ENCODE measurements at regions of chr5 and their contacts with region 1.

Region 1: DNA sequence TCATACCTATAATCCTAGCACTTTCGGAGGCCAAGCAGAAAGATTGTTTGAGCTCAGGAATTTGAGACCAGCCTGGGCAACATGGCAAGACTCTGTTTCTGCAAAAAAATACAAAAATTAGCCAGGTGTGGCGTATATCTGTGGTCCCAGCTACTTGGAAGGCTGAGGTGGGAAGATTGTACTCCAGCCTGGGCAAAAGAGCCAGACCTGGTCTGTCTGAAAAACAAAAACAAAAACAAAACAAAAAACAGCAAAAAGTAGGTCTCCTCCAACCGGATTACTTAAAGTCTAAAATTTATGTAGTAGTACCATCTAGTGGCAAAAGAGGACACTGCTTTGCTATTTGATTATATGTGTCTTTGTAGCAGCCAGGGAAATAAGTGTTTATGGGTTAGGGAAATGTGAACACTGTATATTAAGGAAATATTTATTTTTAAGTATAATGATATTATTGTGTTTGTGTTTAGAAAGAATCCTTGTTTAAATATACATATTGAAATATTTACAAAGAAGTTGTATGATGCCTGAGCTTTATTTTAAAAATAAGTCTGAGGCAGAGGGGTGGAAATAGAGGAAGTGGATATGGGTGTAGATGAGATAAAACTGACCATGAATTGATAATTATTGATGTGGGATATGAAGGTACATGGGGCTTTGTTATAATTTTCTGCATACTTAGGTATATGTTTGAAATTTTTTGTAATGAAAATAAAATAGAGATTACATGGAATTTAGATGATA is 20.0 kb downstream of the APC start:
- DNase-seq: peak; percentile 31
- ATAC-seq: peak; percentile 96
- H3K4me3 ChIP-seq: no peak overlapping the region
- H3K27ac ChIP-seq: no peak overlapping the region
- H3K4me1 ChIP-seq: no peaks in the 10 kb centered on the region
- H3K27me3 ChIP-seq: no peaks in the 10 kb centered on the region
- CTCF ChIP-seq: peak; percentile 58 to 77 (median 75); a peak in 5 of 6 replicates
- EP300 ChIP-seq: no peak
- POLR2A ChIP-seq: no peak
- RAD21 ChIP-seq: peak; percentile 86

Region 2: GRCh38 chr5:112492291-112492690 is 265.3 kb before region 1 on chr5:
- CTCF ChIA-PET with region 1: interaction called, 15 read pairs
- POLR2A ChIA-PET with region 1: no interaction called
- RAD21 ChIA-PET with region 1: interaction called, 6 read pairs
- SMC1A ChIA-PET with region 1: interaction called, 3 read pairs
- in situ Hi-C with region 1: no loop called
- intact Hi-C with region 1: no loop called
- DNase-seq: peak; percentile 12
- ATAC-seq: peak; percentile 100
- H3K4me3 ChIP-seq: no peak overlapping the region
- H3K27ac ChIP-seq: no peak overlapping the region
- H3K4me1 ChIP-seq: no peaks in the 10 kb centered on the region
- H3K27me3 ChIP-seq: no peaks in the 10 kb centered on the region; a peak in 1 of 4 replicates
- CTCF ChIP-seq: peak; percentile 79 to 86 (median 85)
- EP300 ChIP-seq: no peak
- POLR2A ChIP-seq: no peak
- RAD21 ChIP-seq: peak; percentile 69

Region 3: GRCh38 chr5:112551419-112552032 is 206.1 kb before region 1 on chr5:
- CTCF ChIA-PET with region 1: interaction called, 216 read pairs
- POLR2A ChIA-PET with region 1: interaction called, 3 read pairs
- RAD21 ChIA-PET with region 1: interaction called, 39 read pairs
- SMC1A ChIA-PET with region 1: interaction called, 147 read pairs
- in situ Hi-C with region 1: loop called (anchors 5 kb)
- intact Hi-C with region 1: loop called (anchors 1 kb)
- DNase-seq: no peak
- ATAC-seq: peak; percentile 83
- H3K4me3 ChIP-seq: no peak overlapping the region
- H3K27ac ChIP-seq: no peak overlapping the region
- H3K4me1 ChIP-seq: no peaks in the 10 kb centered on the region
- H3K27me3 ChIP-seq: no peaks in the 10 kb centered on the region; a peak in 1 of 4 replicates
- CTCF ChIP-seq: peak; percentile 57 to 79 (median 66)
- EP300 ChIP-seq: no peak
- POLR2A ChIP-seq: no peak
- RAD21 ChIP-seq: peak; percentile 85

Region 4: DNA sequence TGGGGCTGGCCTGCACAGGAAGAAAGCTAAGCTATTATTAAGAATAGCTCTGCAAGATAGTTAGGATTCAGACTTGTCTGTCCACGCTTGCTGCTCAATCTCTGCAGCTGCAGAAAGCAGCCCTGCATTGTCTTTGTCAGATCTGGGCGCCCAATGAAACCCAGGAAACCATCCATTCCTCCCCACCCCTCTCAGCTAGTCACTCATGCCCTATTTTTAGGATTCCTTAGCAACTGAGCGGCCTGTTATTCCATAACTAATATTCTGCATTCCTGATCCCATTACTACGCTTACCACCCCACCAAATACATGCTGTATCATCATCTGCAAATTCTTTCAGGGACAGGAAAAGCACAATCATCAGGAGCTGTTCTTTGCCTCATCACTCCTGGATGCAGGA is 72.9 kb before region 1 on chr5:
- CTCF ChIA-PET with region 1: interaction called, 125 read pairs
- POLR2A ChIA-PET with region 1: interaction called, 3 read pairs
- RAD21 ChIA-PET with region 1: interaction called, 57 read pairs
- SMC1A ChIA-PET with region 1: interaction called, 43 read pairs
- in situ Hi-C with region 1: no loop called
- intact Hi-C with region 1: no loop called
- DNase-seq: no peak
- ATAC-seq: no peak; the same call in 2 of the 3 replicates
- H3K4me3 ChIP-seq: no peak overlapping the region
- H3K27ac ChIP-seq: no peak overlapping the region
- H3K4me1 ChIP-seq: peaks cover 10% of the 10 kb centered on the region
- H3K27me3 ChIP-seq: peaks cover 0 to 2% of the 10 kb centered on the region in 2 experiments; a peak in 1 of 4 replicates
- CTCF ChIP-seq: no peak
- EP300 ChIP-seq: no peak
- POLR2A ChIP-seq: no peak
- RAD21 ChIP-seq: no peak

Region 5: GRCh38 chr5:112707187-112708102 is 50.2 kb before region 1 on chr5:
- CTCF ChIA-PET with region 1: interaction called, 32 read pairs
- POLR2A ChIA-PET with region 1: no interaction called
- RAD21 ChIA-PET with region 1: interaction called, 6 read pairs
- SMC1A ChIA-PET with region 1: interaction called, 20 read pairs
- in situ Hi-C with region 1: no loop called
- intact Hi-C with region 1: loop called (anchors 5 kb)
- DNase-seq: peak; percentile 97
- ATAC-seq: peak; percentile 92
- H3K4me3 ChIP-seq: peak overlapping the region; percentile 85
- H3K27ac ChIP-seq: peak overlapping the region; percentile 79
- H3K4me1 ChIP-seq: peaks cover 3% of the 10 kb centered on the region; the same call in 1 of the 2 replicates
- H3K27me3 ChIP-seq: no peaks in the 10 kb centered on the region
- CTCF ChIP-seq: no peak
- EP300 ChIP-seq: no peak
- POLR2A ChIP-seq: peak; percentile 94
- RAD21 ChIP-seq: no peak

Region 6: GRCh38 chr5:112772124-112772523 is 14.5 kb after region 1 on chr5:
- CTCF ChIA-PET with region 1: interaction called, 22 read pairs
- POLR2A ChIA-PET with region 1: no interaction called
- RAD21 ChIA-PET with region 1: interaction called, 9 read pairs
- SMC1A ChIA-PET with region 1: interaction called, 16 read pairs
- in situ Hi-C with region 1: no loop called
- intact Hi-C with region 1: no loop called
- DNase-seq: no peak
- ATAC-seq: no peak
- H3K4me3 ChIP-seq: no peak overlapping the region
- H3K27ac ChIP-seq: no peak overlapping the region
- H3K4me1 ChIP-seq: no peaks in the 10 kb centered on the region
- H3K27me3 ChIP-seq: no peaks in the 10 kb centered on the region
- CTCF ChIP-seq: no peak
- EP300 ChIP-seq: no peak
- POLR2A ChIP-seq: no peak
- RAD21 ChIP-seq: no peak

Region 7: GRCh38 chr5:112793201-112793600 is 35.6 kb after region 1 on chr5:
- CTCF ChIA-PET with region 1: interaction called, 11 read pairs
- POLR2A ChIA-PET with region 1: no interaction called
- RAD21 ChIA-PET with region 1: no interaction called
- SMC1A ChIA-PET with region 1: no interaction called
- in situ Hi-C with region 1: no loop called
- intact Hi-C with region 1: no loop called
- DNase-seq: no peak
- ATAC-seq: no peak
- H3K4me3 ChIP-seq: no peak overlapping the region
- H3K27ac ChIP-seq: no peak overlapping the region
- H3K4me1 ChIP-seq: no peaks in the 10 kb centered on the region
- H3K27me3 ChIP-seq: no peaks in the 10 kb centered on the region
- CTCF ChIP-seq: no peak
- EP300 ChIP-seq: no peak
- POLR2A ChIP-seq: no peak
- RAD21 ChIP-seq: no peak